HEK293 (cell line): ENCODE measurements at regions of chr16 and their contacts with region 1.

Region 1: DNA sequence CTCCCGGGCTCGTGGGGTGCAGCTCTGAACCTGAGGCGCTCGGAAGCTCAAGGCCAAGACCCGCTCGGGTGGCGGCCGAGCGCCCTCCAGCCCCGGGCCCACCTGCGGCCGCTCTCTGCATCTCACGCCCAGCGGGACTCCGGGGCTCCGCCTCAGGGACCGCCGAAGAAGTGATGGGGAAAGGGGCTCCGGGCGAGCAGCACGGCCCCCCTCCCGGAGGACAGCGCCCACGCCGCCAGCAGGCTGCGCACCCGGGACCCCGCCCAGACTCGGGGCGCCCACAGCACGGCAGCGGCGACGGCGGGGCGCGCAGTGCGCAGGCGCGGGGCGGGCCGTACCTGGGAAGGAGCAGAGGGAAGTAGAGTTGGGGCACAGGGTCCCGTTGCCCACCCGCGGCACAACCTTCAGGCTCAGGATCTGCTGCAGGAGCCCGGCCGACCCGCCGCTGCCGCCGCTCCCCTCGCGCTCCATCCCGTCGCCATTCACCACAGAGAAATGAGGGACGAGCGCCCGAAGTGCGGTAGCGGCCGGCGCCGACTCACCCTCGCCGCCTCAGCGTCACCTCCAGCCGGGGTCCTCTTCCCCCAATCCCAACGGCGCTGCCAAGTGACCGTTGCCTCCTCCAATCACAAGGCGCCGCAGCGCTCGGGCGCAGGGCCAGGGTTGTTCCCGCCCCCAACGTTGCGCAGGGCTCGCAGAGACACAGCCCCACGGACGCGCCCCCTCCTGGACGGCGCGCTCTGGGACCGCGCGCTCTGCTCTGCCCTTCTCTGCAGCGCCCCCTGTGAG is at the start of gene TMEM170A:
- H3K4me3 ChIP-seq: peak within 1 kb of the TSS; percentile 95
- H3K27ac ChIP-seq: peak within 1 kb of the TSS; percentile 84
- H3K4me1 ChIP-seq: peaks cover 9% of the 10 kb centered on the region
- CTCF ChIP-seq: peak; percentile 100

Region 2: DNA sequence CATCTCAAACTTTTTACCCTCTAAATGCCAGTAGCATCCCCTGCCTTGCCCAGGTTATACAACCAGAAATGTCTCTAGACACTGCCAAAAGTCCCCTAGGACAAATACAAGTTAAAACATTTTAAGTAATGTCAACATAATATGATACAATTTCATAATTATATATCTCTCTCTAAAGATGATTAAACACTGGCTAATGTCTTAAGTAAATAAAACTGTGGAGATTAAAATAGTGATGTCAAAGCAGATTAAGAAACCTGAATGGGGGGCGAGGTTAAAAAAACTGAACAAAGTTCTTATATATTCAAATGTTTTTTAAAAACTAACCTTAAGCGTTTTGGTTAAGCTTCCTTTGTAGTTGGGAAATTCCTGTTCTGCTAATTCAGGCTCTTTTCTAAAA is 93.1 kb before region 1 on chr16:
- CTCF ChIA-PET with region 1: no interaction called
- POLR2A ChIA-PET with region 1: no interaction called
- H3K4me3 ChIP-seq: no peak overlapping the region
- H3K27ac ChIP-seq: no peak overlapping the region
- H3K4me1 ChIP-seq: no peaks in the 10 kb centered on the region
- CTCF ChIP-seq: no peak

Region 3: DNA sequence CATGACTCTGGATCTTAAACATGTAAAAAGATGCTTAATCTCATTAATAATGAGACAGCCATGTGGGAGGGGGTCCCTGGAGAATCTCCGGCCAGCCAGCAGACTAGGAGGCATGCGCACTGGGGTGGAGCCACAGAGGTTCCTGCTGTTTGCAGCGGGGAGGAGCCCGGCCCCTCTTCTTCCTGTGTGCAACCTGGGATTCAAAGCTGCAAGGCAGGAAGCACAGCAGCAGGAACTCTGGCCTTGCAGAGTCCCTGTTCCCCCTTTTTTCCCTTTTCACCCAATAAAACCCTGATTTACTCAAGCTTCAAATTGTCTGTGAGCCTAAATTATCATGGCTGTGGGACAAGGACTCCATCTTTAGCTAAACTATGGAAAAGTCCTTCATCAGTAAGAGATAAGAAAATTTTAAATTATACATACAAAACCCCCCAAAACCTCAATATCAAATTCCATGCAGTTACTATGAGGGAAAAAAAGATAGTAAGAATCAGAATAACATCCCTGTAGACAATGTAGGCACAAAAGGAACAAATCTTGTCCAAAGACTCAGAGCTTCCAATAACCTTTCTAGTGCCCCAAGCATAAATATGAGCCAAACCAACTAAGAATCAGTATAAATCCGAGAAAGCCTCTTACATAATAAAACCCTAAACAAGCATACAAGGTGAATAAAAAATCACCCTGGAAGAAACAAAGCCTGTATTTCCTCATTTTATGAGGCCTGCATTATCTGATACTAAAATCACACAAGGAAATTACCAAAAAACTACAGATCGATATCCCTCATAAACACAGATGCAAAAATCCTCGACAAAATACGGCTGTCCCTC is 43.1 kb before region 1 on chr16:
- CTCF ChIA-PET with region 1: interaction called, 15 read pairs
- POLR2A ChIA-PET with region 1: no interaction called
- H3K4me3 ChIP-seq: no peak overlapping the region
- H3K27ac ChIP-seq: 0 out of 2 replicates have a peak overlapping the region, but pooled peaks have one; percentile 20
- H3K4me1 ChIP-seq: peaks cover 12% of the 10 kb centered on the region
- CTCF ChIP-seq: no peak

Region 4: DNA sequence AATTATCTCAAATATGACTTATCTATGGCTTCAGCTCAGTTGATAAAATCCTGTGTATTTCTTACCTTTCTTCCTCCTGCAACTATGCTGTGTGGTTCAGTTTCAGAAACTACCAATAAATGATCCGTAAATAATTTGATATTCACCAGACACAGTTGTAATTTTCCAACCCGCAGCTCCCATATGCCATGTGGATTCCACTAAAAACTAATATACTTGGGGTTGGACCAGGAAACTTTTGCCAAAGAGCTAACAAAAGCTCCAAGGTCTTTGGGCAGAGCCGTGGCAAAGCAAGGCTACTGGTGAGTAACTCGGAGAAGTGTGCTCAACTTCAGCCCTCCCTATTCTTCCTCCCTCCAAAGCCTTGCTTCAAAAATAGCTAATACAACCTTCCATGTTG is 33.2 kb after region 1 on chr16:
- CTCF ChIA-PET with region 1: interaction called, 12 read pairs
- POLR2A ChIA-PET with region 1: no interaction called
- H3K4me3 ChIP-seq: no peak overlapping the region
- H3K27ac ChIP-seq: no peak overlapping the region
- H3K4me1 ChIP-seq: peaks cover 13% of the 10 kb centered on the region
- CTCF ChIP-seq: no peak

Region 5: GRCh38 chr16:75534560-75535205 is 70.4 kb after region 1 on chr16:
- CTCF ChIA-PET with region 1: interaction called, 11 read pairs
- POLR2A ChIA-PET with region 1: no interaction called
- H3K4me3 ChIP-seq: no peak overlapping the region
- H3K27ac ChIP-seq: no peak overlapping the region
- H3K4me1 ChIP-seq: no peaks in the 10 kb centered on the region
- CTCF ChIP-seq: no peak